Colonic mucosa (tissue), 4 donors: ENCODE measurements at regions of chr10 and their contacts with region 1.

Region 1: GRCh38 chr10:96642973-96643372 is 56.2 kb upstream of the TM9SF3 start:
- DNase-seq: peak; percentile 86
- H3K4me3 ChIP-seq: no peak overlapping the region
- H3K27ac ChIP-seq: no peak overlapping the region
- H3K4me1 ChIP-seq: no peaks in the 10 kb centered on the region
- H3K27me3 ChIP-seq: no peaks in the 10 kb centered on the region
- CTCF ChIP-seq: peak; percentile 52

Region 2: GRCh38 chr10:96188916-96189315 is 454.1 kb before region 1 on chr10:
- intact Hi-C with region 1: no loop called
- DNase-seq: no peak
- H3K4me3 ChIP-seq: no peak overlapping the region
- H3K27ac ChIP-seq: no peak overlapping the region
- H3K4me1 ChIP-seq: no peaks in the 10 kb centered on the region
- H3K27me3 ChIP-seq: no peaks in the 10 kb centered on the region
- CTCF ChIP-seq: no peak

Region 3: DNA sequence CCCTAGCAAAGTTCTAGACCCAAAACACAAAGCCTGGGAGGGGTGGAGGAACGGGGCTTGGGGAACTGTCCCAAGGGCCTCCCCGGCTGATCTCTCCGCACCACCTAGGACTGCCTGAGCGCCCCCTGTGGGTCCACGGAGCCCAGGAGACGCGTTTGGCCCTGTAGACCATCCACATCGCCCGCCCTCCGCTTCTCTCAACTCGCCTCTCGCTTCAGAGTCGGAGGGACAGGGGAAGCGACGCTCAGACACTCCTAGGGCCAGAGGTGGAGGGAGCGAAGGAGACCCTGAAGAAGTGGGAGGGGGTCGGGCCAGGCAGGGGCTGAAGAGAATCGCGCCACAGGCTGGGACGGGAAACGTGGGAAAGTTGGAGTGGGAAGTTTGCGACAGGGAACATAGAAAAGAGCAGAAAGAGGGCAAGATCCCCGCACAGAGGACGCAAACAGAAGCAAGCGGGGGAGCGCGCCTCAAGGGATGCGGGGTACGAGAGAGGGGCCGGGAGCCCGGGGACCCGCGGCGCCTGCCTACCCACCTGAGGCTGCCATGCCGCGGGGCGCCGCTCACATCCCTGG is 77.0 kb after region 1 on chr10:
- intact Hi-C with region 1: loop called (anchors 10 kb)
- DNase-seq: peak; percentile 83
- H3K4me3 ChIP-seq: peak overlapping the region; percentile 68
- H3K27ac ChIP-seq: peak overlapping the region; percentile 44
- H3K4me1 ChIP-seq: no peaks in the 10 kb centered on the region
- H3K27me3 ChIP-seq: no peaks in the 10 kb centered on the region
- CTCF ChIP-seq: peak; percentile 53

Region 4: GRCh38 chr10:96830511-96831199 is 187.7 kb after region 1 on chr10:
- intact Hi-C with region 1: loop called (anchors 5 kb)
- DNase-seq: peak; percentile 92
- H3K4me3 ChIP-seq: no peak overlapping the region
- H3K27ac ChIP-seq: peak overlapping the region; percentile 95
- H3K4me1 ChIP-seq: peaks cover 5% of the 10 kb centered on the region
- H3K27me3 ChIP-seq: no peaks in the 10 kb centered on the region
- CTCF ChIP-seq: peak; percentile 93

Region 5: DNA sequence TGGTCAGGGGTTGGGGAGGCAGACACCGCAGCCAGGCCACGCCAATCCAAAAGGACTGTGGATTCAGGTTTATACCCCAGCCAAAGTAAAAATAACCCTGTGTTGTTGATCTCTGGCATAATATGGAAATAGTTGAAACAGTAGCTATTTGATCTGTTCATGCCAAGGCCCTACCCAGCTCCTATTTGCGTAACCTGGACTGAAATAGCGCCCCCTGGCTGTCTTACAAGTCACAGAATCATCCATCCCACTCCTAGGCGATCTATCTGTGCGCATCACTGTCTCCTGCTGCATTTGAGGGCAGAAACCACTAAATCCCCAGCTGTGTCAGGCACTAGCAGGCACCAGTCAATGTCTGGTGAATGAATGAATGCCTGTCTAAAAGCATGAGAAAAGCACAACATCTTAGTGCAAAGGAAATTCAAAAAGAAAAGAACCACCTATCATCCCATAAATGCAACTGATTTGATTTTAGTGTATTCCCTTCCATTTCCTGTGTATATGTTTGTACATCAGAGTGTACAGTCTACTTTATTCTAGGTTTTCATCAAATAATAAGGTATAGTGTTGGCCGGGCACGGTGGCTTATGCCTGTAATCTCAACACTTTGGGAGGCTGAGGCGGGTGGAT is 382.8 kb after region 1 on chr10:
- intact Hi-C with region 1: loop called (anchors 5 kb)
- DNase-seq: peak; percentile 64
- H3K4me3 ChIP-seq: no peak overlapping the region
- H3K27ac ChIP-seq: no peak overlapping the region
- H3K4me1 ChIP-seq: no peaks in the 10 kb centered on the region
- H3K27me3 ChIP-seq: no peaks in the 10 kb centered on the region
- CTCF ChIP-seq: peak; percentile 76